Testis (tissue), 5 donors: ENCODE measurements at regions of chr2 and their contacts with region 1.

Region 1: GRCh38 chr2:201074996-201075395 is 3.2 kb downstream of the NDUFB3 start:
- DNase-seq: no peak
- H3K4me3 ChIP-seq: no peak overlapping the region
- H3K27ac ChIP-seq: no peak overlapping the region
- H3K4me1 ChIP-seq: peaks cover 13% of the 10 kb centered on the region
- H3K27me3 ChIP-seq: no peaks in the 10 kb centered on the region
- CTCF ChIP-seq: no peak
- POLR2A ChIP-seq: no peak

Region 2: GRCh38 chr2:200944467-200945394 is 130.3 kb before region 1 on chr2:
- intact Hi-C with region 1: no loop called
- DNase-seq: peak; percentile 42
- H3K4me3 ChIP-seq: no peak overlapping the region
- H3K27ac ChIP-seq: no peak overlapping the region
- H3K4me1 ChIP-seq: no peaks in the 10 kb centered on the region
- H3K27me3 ChIP-seq: no peaks in the 10 kb centered on the region
- CTCF ChIP-seq: no peak
- POLR2A ChIP-seq: no peak

Region 3: GRCh38 chr2:201118121-201118960 is 43.3 kb after region 1 on chr2:
- intact Hi-C with region 1: loop called (anchors 5 kb)
- DNase-seq: peak; percentile 95
- H3K4me3 ChIP-seq: peak overlapping the region; percentile 91 to 99
- H3K27ac ChIP-seq: peak overlapping the region; percentile 97 to 100
- H3K4me1 ChIP-seq: peaks cover 41% of the 10 kb centered on the region
- H3K27me3 ChIP-seq: no peaks in the 10 kb centered on the region
- CTCF ChIP-seq: peak; percentile 23 to 52 (median 40)
- POLR2A ChIP-seq: no peak